T-cell (primary cell): ENCODE measurements at regions of chr6 and their contacts with region 1.

Region 1: GRCh38 chr6:149806127-149806526 is 56.6 kb downstream of the PCMT1 start:
- DNase-seq: no peak
- ATAC-seq: peak in 1 of 4 experiments; percentile 39
- H3K4me3 ChIP-seq: no peak overlapping the region
- H3K4me3 Mint-ChIP-seq: no peak overlapping the region
- H3K27ac ChIP-seq: no peak overlapping the region
- H3K27ac Mint-ChIP-seq: peak overlapping the region; percentile 30 to 50
- H3K4me1 ChIP-seq: peaks cover 0 to 3% of the 10 kb centered on the region in 2 experiments
- H3K4me1 Mint-ChIP-seq: peaks cover 5 to 24% (median 17%) of the 10 kb centered on the region in 3 donors
- H3K27me3 ChIP-seq: no peaks in the 10 kb centered on the region
- H3K27me3 Mint-ChIP-seq: no peaks in the 10 kb centered on the region

Region 2: GRCh38 chr6:149723771-149724417 is 82.2 kb before region 1 on chr6:
- CTCF ChIA-PET with region 1: no interaction called
- POLR2A ChIA-PET with region 1: no interaction called
- DNase-seq: peak in 28 of 35 experiments; percentile 3 to 66 (median 26)
- ATAC-seq: peak; percentile 87 to 91 (median 90)
- H3K4me3 ChIP-seq: no peak overlapping the region
- H3K4me3 Mint-ChIP-seq: no peak overlapping the region
- H3K27ac ChIP-seq: no peak overlapping the region
- H3K27ac Mint-ChIP-seq: peak overlapping the region in 1 of 2 donors; percentile 41
- H3K4me1 ChIP-seq: peaks cover 9 to 13% of the 10 kb centered on the region in 2 experiments
- H3K4me1 Mint-ChIP-seq: peaks cover 18 to 23% (median 19%) of the 10 kb centered on the region in 3 donors
- H3K27me3 ChIP-seq: no peaks in the 10 kb centered on the region
- H3K27me3 Mint-ChIP-seq: no peaks in the 10 kb centered on the region

Region 3: DNA sequence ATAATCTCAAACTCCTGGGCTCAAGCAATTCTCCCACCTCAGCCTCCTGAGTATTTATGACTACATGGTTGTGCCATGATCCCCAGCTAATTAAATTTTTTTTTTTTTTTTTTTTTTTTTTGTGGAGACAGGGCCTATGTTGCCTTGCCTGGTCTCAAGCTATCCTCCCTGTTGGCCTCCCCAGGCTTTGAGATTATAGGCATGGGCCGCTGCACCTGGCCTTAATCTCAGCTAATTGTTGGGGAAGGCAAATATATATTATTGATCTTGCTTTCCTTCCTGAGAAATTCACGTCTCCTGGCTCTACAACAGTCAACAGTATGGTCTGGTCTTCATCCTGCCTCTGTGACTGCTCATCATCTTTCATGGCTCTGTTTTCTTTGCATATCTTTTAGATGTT is 36.5 kb before region 1 on chr6:
- CTCF ChIA-PET with region 1: no interaction called
- POLR2A ChIA-PET with region 1: interaction called in 1 of 2 experiments, 10 read pairs
- DNase-seq: no peak
- ATAC-seq: no peak
- H3K4me3 ChIP-seq: no peak overlapping the region
- H3K4me3 Mint-ChIP-seq: no peak overlapping the region
- H3K27ac ChIP-seq: no peak overlapping the region
- H3K27ac Mint-ChIP-seq: no peak overlapping the region
- H3K4me1 ChIP-seq: no peaks in the 10 kb centered on the region
- H3K4me1 Mint-ChIP-seq: peaks cover 6 to 13% (median 11%) of the 10 kb centered on the region in 3 donors
- H3K27me3 ChIP-seq: no peaks in the 10 kb centered on the region
- H3K27me3 Mint-ChIP-seq: no peaks in the 10 kb centered on the region